Activated CD4-positive, alpha-beta T cell treated with anti-CD3 and anti-CD28 coated beads, Interleukin-2, amount 10 ng/mL, durations not matched to agents 24 days and 14 days (primary cell): ENCODE measurements at regions of chr1 and their contacts with region 1.

Region 1: DNA sequence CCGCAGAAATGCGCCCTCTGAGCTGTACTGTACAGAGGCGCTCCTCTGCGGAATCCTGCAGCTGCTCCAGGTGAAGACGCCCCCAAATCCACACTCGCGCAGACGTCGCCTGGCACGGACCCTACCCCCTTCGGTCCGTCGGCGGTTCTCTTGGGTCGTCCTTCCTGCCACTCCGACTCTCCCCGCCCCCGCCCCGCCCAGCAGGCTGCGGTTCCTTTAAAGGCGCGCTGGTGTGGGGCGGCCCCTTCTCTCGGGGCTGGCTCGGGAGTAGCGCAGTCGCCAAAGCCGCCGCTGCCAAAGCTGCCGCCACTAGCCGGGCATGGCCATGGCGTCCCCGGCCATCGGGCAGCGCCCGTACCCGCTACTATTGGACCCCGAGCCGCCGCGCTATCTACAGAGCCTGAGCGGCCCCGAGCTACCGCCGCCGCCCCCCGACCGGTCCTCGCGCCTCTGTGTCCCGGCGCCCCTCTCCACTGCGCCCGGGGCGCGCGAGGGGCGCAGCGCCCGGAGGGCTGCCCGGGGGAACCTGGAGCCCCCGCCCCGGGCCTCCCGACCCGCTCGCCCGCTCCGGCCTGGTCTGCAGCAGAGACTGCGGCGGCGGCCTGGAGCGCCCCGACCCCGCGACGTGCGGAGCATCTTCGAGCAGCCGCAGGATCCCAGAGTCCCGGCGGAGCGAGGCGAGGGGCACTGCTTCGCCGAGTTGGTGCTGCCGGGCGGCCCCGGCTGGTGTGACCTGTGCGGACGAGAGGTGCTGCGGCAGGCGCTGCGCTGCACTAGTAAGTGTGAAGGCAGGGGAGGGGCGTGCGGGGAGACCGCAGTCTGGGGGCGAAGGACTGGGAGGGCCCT is at the start of gene RASSF5:
- DNase-seq: peak; percentile 96
- H3K4me3 Mint-ChIP-seq: peak within 1 kb of the TSS; percentile 80
- H3K27ac Mint-ChIP-seq: peak within 1 kb of the TSS; percentile 58
- H3K4me1 Mint-ChIP-seq: peaks cover 41% of the 10 kb centered on the region
- H3K27me3 Mint-ChIP-seq: peaks cover 22% of the 10 kb centered on the region
- total RNA-seq, gene RASSF5: 193 and 196 TPM in 2 replicates

Region 2: DNA sequence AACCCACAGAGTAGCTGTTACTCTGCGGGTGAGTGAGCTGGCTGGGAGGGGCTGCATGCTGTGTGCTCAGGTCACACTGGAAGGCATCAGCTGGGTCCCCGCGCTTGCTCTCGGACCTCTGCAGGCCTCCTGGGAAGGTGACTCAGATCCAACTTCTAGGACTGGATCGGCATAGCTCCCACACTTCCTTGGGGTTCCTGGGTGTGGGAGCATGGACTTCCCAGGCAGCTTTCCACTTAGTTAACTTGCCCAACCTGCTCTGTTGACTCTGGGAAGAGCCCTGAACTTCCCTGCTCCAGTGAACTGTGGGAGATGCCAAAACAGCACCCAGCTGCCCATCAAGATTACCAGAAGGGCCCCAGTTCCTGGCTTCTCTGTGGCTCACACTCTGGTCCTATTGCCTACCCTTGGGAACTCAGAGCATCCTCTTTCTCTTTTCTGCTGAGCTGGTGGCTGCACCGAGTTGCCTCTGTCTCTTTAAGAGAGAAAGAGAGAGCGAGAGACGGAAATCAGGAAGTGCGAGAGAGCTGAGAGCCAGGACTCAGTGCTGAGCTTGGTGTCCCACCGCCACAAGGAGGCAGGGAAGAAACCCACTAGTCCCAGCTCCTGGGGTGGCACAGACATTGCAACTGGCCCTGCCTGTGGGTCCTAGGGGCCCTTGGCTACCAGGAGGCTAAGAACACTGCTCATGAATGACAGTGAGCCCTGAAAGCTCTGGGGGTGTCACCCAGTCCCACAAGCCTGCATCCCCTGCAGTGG is 37.4 kb before region 1 on chr1 and contains the start of gene IKBKE:
- intact Hi-C with region 1: loop called (anchors 5 kb)
- DNase-seq: peak; percentile 89
- H3K4me3 Mint-ChIP-seq: peak within 1 kb of the TSS; percentile 86
- H3K27ac Mint-ChIP-seq: peak within 1 kb of the TSS; percentile 86
- H3K4me1 Mint-ChIP-seq: peaks cover 83% of the 10 kb centered on the region
- H3K27me3 Mint-ChIP-seq: no peaks in the 10 kb centered on the region
- total RNA-seq, gene IKBKE: 50.0 and 51.5 TPM in 2 replicates

Region 3: DNA sequence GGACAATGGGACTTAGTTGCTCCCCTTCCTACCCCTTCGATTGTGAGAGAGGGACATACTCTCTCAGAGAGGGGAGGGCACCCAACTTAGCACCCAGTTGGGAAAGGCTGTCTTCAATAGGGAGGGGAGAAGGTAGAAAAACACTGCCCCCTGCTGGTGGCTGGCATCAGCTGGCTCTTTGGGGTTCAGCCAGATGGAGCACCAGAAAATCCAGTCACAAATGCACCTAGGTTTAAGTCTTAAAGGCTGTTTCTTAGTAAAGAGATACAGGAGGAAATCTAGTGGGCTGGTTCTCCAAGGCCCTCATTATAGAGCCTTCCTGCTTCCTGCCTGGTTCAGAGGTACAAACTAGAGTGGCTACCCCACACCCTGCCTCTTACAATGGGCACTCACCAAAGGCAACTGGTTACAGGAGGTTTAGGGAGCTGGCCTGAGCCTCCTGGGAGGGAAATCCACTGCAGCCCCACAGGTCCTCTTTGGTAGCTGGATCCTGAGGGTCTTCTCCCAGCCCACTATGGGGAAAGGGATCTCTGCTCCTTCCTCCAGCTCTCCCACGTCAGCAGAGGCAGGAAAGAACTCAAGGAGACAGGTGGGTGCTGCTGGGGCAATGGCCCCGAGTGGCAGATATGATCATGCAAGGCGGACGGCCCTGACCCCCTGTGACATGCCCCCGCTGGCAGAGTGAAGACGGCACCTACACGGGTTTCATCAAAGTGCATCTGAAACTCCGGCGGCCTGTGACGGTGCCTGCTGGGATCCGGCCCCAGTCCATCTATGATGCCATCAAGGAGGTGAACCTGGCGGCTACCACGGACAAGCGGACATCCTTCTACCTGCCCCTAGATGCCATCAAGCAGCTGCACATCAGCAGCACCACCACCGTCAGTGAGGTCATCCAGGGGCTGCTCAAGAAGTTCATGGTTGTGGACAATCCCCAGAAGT is 76.5 kb after region 1 on chr1:
- intact Hi-C with region 1: loop called (anchors 1 kb)
- DNase-seq: peak; percentile 94
- H3K4me3 Mint-ChIP-seq: peak overlapping the region; percentile 84
- H3K27ac Mint-ChIP-seq: peak overlapping the region; percentile 100
- H3K4me1 Mint-ChIP-seq: peaks cover 83% of the 10 kb centered on the region
- H3K27me3 Mint-ChIP-seq: no peaks in the 10 kb centered on the region